SK-N-SH (cell line): ENCODE measurements at regions of chr4 and their contacts with region 1.

Region 1: DNA sequence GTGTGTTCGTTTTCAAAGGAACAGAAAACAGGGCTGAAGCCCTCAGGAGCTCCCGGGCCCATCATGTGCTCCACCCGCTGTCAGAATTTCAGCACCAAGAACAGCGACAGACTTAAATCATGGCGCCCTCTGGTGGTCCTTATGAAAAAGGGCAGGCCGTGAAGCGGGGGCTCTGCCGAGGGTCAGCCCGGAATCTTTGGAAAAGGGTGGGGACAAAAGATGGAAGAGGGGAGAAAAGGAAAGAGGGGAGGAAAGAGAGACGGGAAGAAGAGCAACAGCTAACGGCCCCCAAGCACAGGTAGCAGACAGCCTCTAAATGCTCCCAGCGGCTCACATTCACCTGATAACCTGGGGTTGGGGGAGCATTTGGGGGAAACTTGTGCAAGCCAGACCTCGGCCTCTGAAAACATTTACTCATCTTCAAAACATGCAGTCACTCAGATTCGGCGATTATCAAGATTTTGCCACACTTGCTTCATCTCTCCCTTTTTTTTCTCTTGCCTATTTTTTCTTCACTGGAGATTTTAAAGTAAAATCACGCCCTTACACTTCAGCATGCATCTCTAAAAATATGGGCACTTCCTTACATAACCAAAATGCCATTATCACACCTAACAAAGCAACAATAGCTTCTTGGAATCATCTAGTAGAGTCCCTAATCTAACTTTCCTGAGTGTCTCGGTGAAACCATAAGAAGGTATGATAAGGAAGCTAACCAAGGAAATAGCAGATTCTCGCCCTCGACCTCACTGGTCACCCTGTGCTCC is 28.1 kb upstream of the MAN2B2 start:
- DNase-seq: peak; percentile 85
- H3K4me3 ChIP-seq: peak overlapping the region in 1 of 2 experiments; percentile 26; a peak in 1 of 4 replicates
- H3K27ac ChIP-seq: no peak overlapping the region
- H3K4me1 ChIP-seq: peaks cover 0 to 20% of the 10 kb centered on the region in 2 experiments; a peak in 1 of 4 replicates
- H3K27me3 ChIP-seq: no peaks in the 10 kb centered on the region
- CTCF ChIP-seq: peak; percentile 93
- EP300 ChIP-seq: no peak
- RAD21 ChIP-seq: peak; percentile 84

Region 2: GRCh38 chr4:5888222-5888701 is 658.6 kb before region 1 on chr4:
- CTCF ChIA-PET with region 1: no interaction called
- POLR2A ChIA-PET with region 1: no interaction called
- DNase-seq: peak; percentile 92
- H3K4me3 ChIP-seq: peak overlapping the region; percentile 48 to 58
- H3K27ac ChIP-seq: peak overlapping the region in 1 of 2 experiments; percentile 92; a peak in 2 of 4 replicates
- H3K4me1 ChIP-seq: peaks cover 0 to 43% of the 10 kb centered on the region in 2 experiments; a peak in 1 of 4 replicates
- H3K27me3 ChIP-seq: peaks cover 24% of the 10 kb centered on the region; the same call in 1 of the 2 replicates
- CTCF ChIP-seq: no peak
- EP300 ChIP-seq: no peak
- RAD21 ChIP-seq: no peak

Region 3: DNA sequence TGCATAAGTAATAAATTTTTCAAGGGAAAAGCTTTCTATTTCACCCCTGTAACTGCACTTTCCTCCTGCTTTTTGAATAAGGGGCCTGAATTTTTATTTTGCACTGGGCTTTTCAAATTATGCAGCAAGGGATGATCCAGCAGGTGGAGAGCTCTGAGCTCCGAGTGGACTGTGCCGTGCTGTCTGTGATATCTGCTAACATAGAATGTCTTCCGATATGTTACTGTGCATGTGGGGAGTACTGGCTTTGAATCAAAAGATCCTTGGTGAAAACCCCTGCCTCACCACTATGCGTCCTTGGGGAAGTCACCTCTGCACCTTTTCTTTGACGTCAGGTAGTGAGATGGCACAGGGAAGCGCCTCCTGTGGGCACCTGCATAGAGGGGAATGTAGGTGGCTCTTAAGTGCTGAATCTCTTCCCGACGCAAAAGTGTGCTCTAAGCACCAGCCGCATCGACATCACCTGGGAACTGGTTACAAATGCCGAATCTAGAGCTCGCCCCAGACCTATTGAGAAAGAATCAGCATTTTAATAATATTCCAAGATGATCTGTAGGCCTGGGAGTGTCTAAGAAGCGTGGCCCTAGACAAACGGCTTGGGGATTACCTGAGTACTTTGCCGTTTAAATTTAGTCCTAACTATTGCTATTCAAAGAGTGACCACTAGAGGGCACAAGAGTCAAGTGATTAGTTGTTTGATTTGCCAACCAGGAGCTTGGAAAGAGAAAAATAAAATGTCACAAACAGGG is 296.5 kb before region 1 on chr4:
- CTCF ChIA-PET with region 1: interaction called, 63 read pairs
- POLR2A ChIA-PET with region 1: no interaction called
- DNase-seq: peak; percentile 76
- H3K4me3 ChIP-seq: peak overlapping the region in 1 of 2 experiments; percentile 12; a peak in 1 of 4 replicates
- H3K27ac ChIP-seq: no peak overlapping the region
- H3K4me1 ChIP-seq: peaks cover 0 to 28% of the 10 kb centered on the region in 2 experiments; a peak in 2 of 4 replicates
- H3K27me3 ChIP-seq: no peaks in the 10 kb centered on the region; the same call in 1 of the 2 replicates
- CTCF ChIP-seq: peak; percentile 83
- EP300 ChIP-seq: no peak
- RAD21 ChIP-seq: peak; percentile 89

Region 4: GRCh38 chr4:6362896-6363295 is 184.0 kb before region 1 on chr4:
- CTCF ChIA-PET with region 1: interaction called, 12 read pairs
- POLR2A ChIA-PET with region 1: no interaction called
- DNase-seq: no peak
- H3K4me3 ChIP-seq: no peak overlapping the region
- H3K27ac ChIP-seq: no peak overlapping the region
- H3K4me1 ChIP-seq: peaks cover 0 to 11% of the 10 kb centered on the region in 2 experiments; a peak in 1 of 4 replicates
- H3K27me3 ChIP-seq: no peaks in the 10 kb centered on the region; the same call in 1 of the 2 replicates
- CTCF ChIP-seq: no peak
- EP300 ChIP-seq: no peak
- RAD21 ChIP-seq: no peak

Region 5: GRCh38 chr4:6493658-6494304 is 53.1 kb before region 1 on chr4:
- CTCF ChIA-PET with region 1: interaction called, 12 read pairs
- POLR2A ChIA-PET with region 1: no interaction called
- DNase-seq: no peak
- H3K4me3 ChIP-seq: no peak overlapping the region
- H3K27ac ChIP-seq: no peak overlapping the region
- H3K4me1 ChIP-seq: no peaks in the 10 kb centered on the region
- H3K27me3 ChIP-seq: no peaks in the 10 kb centered on the region
- CTCF ChIP-seq: no peak
- EP300 ChIP-seq: no peak
- RAD21 ChIP-seq: no peak

Region 6: GRCh38 chr4:6529021-6529420 is 17.8 kb before region 1 on chr4:
- CTCF ChIA-PET with region 1: interaction called, 27 read pairs
- POLR2A ChIA-PET with region 1: no interaction called
- DNase-seq: no peak
- H3K4me3 ChIP-seq: no peak overlapping the region
- H3K27ac ChIP-seq: no peak overlapping the region
- H3K4me1 ChIP-seq: no peaks in the 10 kb centered on the region
- H3K27me3 ChIP-seq: no peaks in the 10 kb centered on the region; the same call in 1 of the 2 replicates
- CTCF ChIP-seq: no peak
- EP300 ChIP-seq: no peak
- RAD21 ChIP-seq: no peak

Region 7: DNA sequence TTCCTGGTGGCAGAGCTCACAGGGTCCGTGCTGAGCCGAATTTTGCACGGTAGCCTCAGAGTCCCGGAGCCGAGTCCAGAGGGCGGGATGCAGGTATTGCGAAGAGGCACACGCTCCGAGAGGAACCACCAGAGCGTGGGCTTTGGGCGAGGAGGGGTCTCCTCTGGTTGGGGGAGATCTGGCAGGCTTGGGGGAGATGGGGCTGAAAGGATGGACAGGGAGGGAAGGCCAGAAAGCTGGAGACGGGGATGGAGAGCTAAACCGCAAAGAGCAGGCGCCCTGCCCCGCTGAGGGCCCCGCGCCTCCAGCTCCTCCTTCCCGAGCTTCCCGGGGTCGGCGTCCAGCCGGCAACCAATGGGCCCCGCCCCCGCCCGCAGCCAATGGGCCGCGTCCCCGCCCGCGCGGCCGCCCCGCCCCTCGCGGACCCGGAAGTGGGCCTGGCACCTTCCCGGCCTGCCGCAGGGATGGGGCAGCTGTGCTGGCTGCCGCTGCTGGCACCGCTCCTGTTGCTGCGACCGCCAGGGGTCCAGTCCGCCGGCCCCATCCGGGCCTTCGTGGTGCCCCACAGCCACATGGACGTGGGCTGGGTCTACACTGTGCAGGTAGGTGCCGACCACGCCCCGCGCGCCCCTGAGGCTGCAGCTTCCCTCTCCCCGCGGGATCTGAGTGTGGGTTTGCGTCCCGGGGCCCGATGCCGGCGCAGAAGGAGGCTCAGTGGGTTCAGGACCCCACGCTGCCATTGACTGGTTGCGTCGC is 28.1 kb after region 1 on chr4 and contains the start of gene MAN2B2:
- CTCF ChIA-PET with region 1: interaction called, 45 read pairs
- POLR2A ChIA-PET with region 1: interaction called, 6 read pairs
- DNase-seq: peak; percentile 100
- H3K4me3 ChIP-seq: peak within 1 kb of the TSS; percentile 92 to 98
- H3K27ac ChIP-seq: peak within 1 kb of the TSS in 1 of 2 experiments; percentile 77; a peak in 2 of 4 replicates
- H3K4me1 ChIP-seq: peaks cover 3 to 15% of the 10 kb centered on the region in 2 experiments; a peak in 2 of 4 replicates
- H3K27me3 ChIP-seq: no peaks in the 10 kb centered on the region; the same call in 1 of the 2 replicates
- CTCF ChIP-seq: peak; percentile 29; the same call in 1 of the 2 replicates
- EP300 ChIP-seq: no peak
- RAD21 ChIP-seq: no peak
- polyA plus RNA-seq, gene MAN2B2: 18.5 and 24.9 TPM in 2 replicates